ENCODE measurements at regions of chr11 and their contacts with region 1.

Region 1: GRCh38 chr11:14454861-14455632 is 44.6 kb downstream of the COPB1 start:
- DNase-seq: peak; percentile 19

Region 2: DNA sequence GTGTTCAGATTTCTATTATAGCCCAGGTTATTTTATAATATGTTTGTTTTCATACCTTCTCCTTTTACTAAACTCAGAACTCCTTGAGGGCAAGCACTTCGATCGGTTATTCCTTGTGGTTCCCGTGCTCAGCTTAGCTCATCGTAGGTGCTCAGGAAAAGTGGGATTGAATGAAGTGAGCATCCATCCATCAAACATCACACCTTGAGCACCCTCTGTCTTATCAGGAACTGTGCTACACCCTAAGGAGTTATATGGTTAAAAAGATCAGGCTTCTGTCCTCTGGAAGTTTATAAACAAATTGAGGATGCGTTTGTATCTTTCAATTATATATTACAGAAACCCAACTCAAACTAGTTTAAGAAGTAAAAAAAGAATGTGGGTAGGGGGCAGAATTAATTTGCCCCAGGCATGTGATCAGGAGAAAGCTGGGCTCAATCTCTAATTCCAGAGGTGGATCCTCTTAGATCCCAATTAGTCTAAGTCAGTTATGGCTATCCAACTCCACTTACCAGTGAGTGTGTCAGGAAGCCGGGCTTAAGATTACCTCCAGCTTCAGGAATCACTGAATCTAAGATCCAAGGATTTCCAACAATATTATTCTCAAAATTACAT is 36.1 kb before region 1 on chr11:
- CTCF ChIA-PET with region 1: interaction called, 13 read pairs
- POLR2A ChIA-PET with region 1: no interaction called
- DNase-seq: peak; percentile 58